Panc1 (cell line): ENCODE measurements at regions of chr2 and their contacts with region 1.

Region 1: GRCh38 chr2:151905963-151906632 is 77.9 kb upstream of the ARL5A start:
- DNase-seq: no peak
- ATAC-seq: no peak
- H3K4me3 ChIP-seq: no peak overlapping the region
- H3K27ac ChIP-seq: no peak overlapping the region
- H3K4me1 ChIP-seq: no peaks in the 10 kb centered on the region
- H3K27me3 ChIP-seq: no peaks in the 10 kb centered on the region; the same call in 1 of the 2 replicates
- CTCF ChIP-seq: no peak

Region 2: GRCh38 chr2:151959238-151959637 is 53.1 kb after region 1 on chr2:
- CTCF ChIA-PET with region 1: no interaction called
- POLR2A ChIA-PET with region 1: interaction called, 10 read pairs
- in situ Hi-C with region 1: no loop called
- intact Hi-C with region 1: no loop called
- DNase-seq: no peak
- ATAC-seq: no peak
- H3K4me3 ChIP-seq: no peak overlapping the region
- H3K27ac ChIP-seq: no peak overlapping the region
- H3K4me1 ChIP-seq: no peaks in the 10 kb centered on the region
- H3K27me3 ChIP-seq: no peaks in the 10 kb centered on the region
- CTCF ChIP-seq: no peak

Region 3: DNA sequence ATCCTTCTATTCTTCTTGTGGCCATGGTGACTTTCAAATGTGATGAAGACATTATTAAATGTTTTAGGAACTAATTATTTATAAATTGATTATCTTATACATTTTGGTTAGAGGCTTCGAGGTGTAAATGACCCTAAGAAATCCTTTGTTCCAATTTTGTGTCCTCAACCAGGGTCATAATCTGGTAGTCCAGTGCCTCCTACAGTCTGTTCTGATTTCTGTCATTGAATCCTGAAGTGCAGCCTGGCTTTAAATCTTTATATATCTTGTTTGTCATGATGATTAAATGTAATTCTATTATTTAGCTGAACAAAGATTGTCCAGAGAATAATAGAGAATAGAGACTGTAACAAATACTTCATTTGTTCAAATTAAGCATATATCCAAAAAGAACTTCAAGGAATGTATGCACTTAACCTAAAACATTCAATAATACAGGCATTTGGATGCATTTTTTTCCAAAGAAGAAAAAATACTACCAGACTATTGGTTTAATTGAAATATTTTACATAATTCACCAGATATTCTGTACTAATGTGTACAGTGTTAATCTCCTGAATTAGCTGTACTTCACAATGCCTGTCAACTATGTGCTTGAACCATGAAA is 721.4 kb after region 1 on chr2:
- CTCF ChIA-PET with region 1: no interaction called
- POLR2A ChIA-PET with region 1: no interaction called
- in situ Hi-C with region 1: no loop called
- intact Hi-C with region 1: no loop called
- DNase-seq: no peak
- ATAC-seq: no peak
- H3K4me3 ChIP-seq: no peak overlapping the region
- H3K27ac ChIP-seq: no peak overlapping the region
- H3K4me1 ChIP-seq: no peaks in the 10 kb centered on the region
- H3K27me3 ChIP-seq: no peaks in the 10 kb centered on the region
- CTCF ChIP-seq: peak; percentile 57; the same call in 1 of the 2 replicates

Region 4: GRCh38 chr2:153347818-153348495 is 1441.9 kb after region 1 on chr2:
- CTCF ChIA-PET with region 1: no interaction called
- POLR2A ChIA-PET with region 1: no interaction called
- in situ Hi-C with region 1: no loop called
- intact Hi-C with region 1: no loop called
- DNase-seq: no peak
- ATAC-seq: no peak
- H3K4me3 ChIP-seq: no peak overlapping the region
- H3K27ac ChIP-seq: no peak overlapping the region
- H3K4me1 ChIP-seq: no peaks in the 10 kb centered on the region
- H3K27me3 ChIP-seq: no peaks in the 10 kb centered on the region
- CTCF ChIP-seq: no peak